ENCODE measurements at regions of chr1 and their contacts with region 1.

Region 1: GRCh38 chr1:160085686-160086455 is 4.5 kb downstream of the KCNJ9 start:
- DNase-seq: peak; percentile 64
- ATAC-seq: peak; percentile 92
- H3K4me3 ChIP-seq: no peak overlapping the region
- H3K27ac ChIP-seq: no peak overlapping the region
- H3K4me1 ChIP-seq: peaks cover 3% of the 10 kb centered on the region; the same call in 1 of the 2 replicates
- H3K27me3 ChIP-seq: peaks cover 41% of the 10 kb centered on the region
- CTCF ChIP-seq: peak; percentile 93
- POLR2A ChIP-seq: no peak
- RAD21 ChIP-seq: peak; percentile 73

Region 2: GRCh38 chr1:160277330-160277729 is 191.5 kb after region 1 on chr1:
- CTCF ChIA-PET with region 1: no interaction called
- POLR2A ChIA-PET with region 1: interaction called, 11 read pairs
- dilution Hi-C with region 1: no loop called
- in situ Hi-C with region 1: no loop called
- intact Hi-C with region 1: no loop called
- DNase-seq: no peak
- ATAC-seq: no peak
- H3K4me3 ChIP-seq: no peak overlapping the region
- H3K27ac ChIP-seq: no peak overlapping the region
- H3K4me1 ChIP-seq: no peaks in the 10 kb centered on the region
- H3K27me3 ChIP-seq: no peaks in the 10 kb centered on the region
- CTCF ChIP-seq: no peak
- POLR2A ChIP-seq: no peak
- RAD21 ChIP-seq: no peak

Region 3: GRCh38 chr1:160437432-160438316 is 351.8 kb after region 1 on chr1:
- CTCF ChIA-PET with region 1: no interaction called
- POLR2A ChIA-PET with region 1: no interaction called
- dilution Hi-C with region 1: no loop called
- in situ Hi-C with region 1: no loop called
- intact Hi-C with region 1: no loop called
- DNase-seq: no peak
- ATAC-seq: no peak
- H3K4me3 ChIP-seq: no peak overlapping the region
- H3K27ac ChIP-seq: no peak overlapping the region
- H3K4me1 ChIP-seq: no peaks in the 10 kb centered on the region
- H3K27me3 ChIP-seq: no peaks in the 10 kb centered on the region
- CTCF ChIP-seq: no peak
- POLR2A ChIP-seq: no peak
- RAD21 ChIP-seq: no peak